HCT116 (cell line): ENCODE measurements at regions of chr14 and their contacts with region 1.

Region 1: DNA sequence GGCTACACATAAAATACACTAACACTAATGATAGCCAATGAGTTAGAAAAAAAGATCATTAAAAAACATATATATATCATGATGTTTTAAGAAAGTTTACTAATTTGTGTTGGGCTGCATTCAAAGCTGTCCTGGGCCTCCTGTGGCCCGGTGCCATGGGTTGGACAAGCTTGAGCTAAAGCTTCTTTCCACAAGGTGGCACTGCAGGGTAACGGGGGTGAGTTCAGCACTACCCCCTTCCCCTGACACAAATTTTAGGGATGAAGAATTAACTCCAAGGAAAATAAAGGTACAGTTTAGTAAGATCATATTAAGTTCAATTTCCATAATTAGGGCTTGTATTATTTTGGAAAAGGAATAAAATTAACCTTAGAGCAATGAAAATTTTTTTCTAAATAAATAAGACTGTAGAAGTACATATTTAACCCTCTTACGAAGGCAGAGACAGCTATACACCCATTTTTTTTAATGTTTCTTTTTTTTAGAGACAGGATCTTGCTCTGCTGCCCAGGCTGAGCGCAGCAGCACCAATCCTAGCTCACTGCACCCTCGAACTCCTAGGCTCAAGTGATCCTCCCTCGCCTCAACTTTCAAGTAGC is 38.9 kb downstream of the PPP1R13B start:
- DNase-seq: peak; percentile 58
- ATAC-seq: peak; percentile 96
- H3K4me3 ChIP-seq: no peak overlapping the region
- H3K27ac ChIP-seq: no peak overlapping the region
- H3K4me1 ChIP-seq: no peaks in the 10 kb centered on the region
- H3K27me3 ChIP-seq: no peaks in the 10 kb centered on the region
- CTCF ChIP-seq: peak; percentile 81 to 93 (median 81)
- POLR2A ChIP-seq: no peak
- RAD21 ChIP-seq: peak; percentile 95

Region 2: DNA sequence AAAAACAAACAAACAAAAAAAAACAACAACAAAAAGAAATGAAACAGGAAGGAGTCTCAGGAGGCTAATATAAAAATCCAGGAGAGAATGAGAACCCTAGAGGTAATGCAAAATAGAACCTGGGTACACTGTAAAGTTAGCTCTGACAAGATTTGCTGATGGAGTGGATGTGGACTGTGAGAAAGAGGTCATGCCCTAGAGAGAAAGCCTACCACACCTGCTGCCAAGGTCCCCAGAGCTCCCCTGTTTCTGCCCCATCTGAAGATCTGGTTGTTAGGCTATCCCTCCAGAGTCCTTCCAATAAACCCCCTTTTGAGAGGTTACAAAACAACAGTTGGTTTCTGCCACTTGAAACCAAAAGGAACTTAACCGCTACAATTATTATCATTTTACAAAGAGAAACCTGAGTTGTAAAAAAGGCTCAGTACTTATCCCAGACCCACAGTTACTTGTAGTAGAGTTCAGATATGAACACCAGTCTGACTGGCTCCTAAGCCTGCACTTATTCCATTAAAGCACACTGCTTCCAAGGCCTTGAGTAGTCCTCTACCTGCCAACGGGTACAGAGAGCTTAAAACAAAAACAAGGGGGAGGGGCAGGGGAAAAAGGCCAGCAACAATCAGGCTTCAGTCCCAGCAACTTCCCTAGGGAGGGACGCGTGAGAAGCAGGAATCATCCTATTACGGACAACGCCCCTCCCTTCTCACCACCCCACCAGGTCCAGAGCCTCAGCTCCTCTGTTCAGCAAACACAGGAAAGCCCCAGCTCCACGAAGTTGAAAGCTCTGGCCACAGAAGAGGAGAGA is 11.2 kb after region 1 on chr14:
- CTCF ChIA-PET with region 1: interaction called, 33 read pairs
- POLR2A ChIA-PET with region 1: interaction called, 3 read pairs
- RAD21 ChIA-PET with region 1: no interaction called
- intact Hi-C with region 1: no loop called
- DNase-seq: no peak
- ATAC-seq: no peak
- H3K4me3 ChIP-seq: no peak overlapping the region
- H3K27ac ChIP-seq: no peak overlapping the region
- H3K4me1 ChIP-seq: peaks cover 0 to 2% of the 10 kb centered on the region in 2 experiments; a peak in 1 of 4 replicates
- H3K27me3 ChIP-seq: no peaks in the 10 kb centered on the region
- CTCF ChIP-seq: no peak
- POLR2A ChIP-seq: no peak
- RAD21 ChIP-seq: no peak

Region 3: DNA sequence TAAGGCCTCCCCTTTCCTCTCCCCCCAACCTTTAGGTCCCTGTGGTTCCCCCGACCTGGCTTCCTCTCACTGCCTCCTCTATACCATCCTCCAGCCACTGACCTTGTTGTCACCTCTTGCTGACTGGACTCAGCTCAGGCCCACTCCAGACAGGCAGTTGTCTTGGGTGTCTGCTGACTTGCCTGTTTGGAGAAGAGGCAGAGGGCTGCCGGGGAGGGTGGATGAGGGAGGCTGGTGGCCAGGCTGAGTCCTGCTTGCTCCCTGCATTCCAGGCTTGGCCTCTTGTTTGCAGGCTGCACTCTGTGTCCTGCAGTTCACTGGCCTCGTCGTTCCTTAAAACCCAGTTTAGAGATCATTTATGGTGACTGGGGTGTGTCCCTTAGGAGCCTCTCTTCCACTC is 164.9 kb after region 1 on chr14:
- CTCF ChIA-PET with region 1: interaction called, 38 read pairs
- POLR2A ChIA-PET with region 1: no interaction called
- RAD21 ChIA-PET with region 1: no interaction called
- intact Hi-C with region 1: no loop called
- DNase-seq: no peak
- ATAC-seq: no peak
- H3K4me3 ChIP-seq: no peak overlapping the region
- H3K27ac ChIP-seq: no peak overlapping the region
- H3K4me1 ChIP-seq: no peaks in the 10 kb centered on the region; a peak in 1 of 4 replicates
- H3K27me3 ChIP-seq: no peaks in the 10 kb centered on the region
- CTCF ChIP-seq: no peak
- POLR2A ChIP-seq: no peak
- RAD21 ChIP-seq: no peak

Region 4: DNA sequence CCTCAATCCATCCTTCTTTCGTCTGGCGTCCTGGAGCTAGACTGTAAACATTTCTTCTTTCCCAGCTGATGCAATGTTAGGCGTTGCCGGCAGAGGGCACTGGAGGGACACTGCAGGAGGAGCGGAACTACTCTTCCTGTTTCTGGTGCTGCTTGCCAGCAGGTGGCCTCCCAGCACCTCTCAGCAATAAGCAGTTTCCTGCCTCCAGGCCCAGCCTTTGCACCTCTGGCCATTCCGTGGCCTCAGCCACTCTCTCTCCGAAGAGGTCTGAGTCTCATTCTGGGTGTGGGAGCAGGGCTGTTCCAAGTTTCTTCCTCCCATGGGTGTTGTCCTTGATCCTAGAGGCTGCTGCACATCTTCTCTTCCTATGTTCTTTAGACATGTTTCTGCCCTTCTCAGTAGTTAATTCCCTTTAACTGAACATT is 269.5 kb after region 1 on chr14:
- CTCF ChIA-PET with region 1: interaction called, 30 read pairs
- POLR2A ChIA-PET with region 1: no interaction called
- RAD21 ChIA-PET with region 1: interaction called in 1 of 2 experiments, 3 read pairs
- intact Hi-C with region 1: loop called (anchors 5 kb)
- DNase-seq: peak; percentile 88
- ATAC-seq: peak; percentile 98
- H3K4me3 ChIP-seq: no peak overlapping the region
- H3K27ac ChIP-seq: no peak overlapping the region
- H3K4me1 ChIP-seq: peaks cover 2 to 5% of the 10 kb centered on the region in 2 experiments; a peak in 3 of 4 replicates
- H3K27me3 ChIP-seq: no peaks in the 10 kb centered on the region
- CTCF ChIP-seq: peak; percentile 100
- POLR2A ChIP-seq: no peak
- RAD21 ChIP-seq: peak; percentile 100